Naive thymus-derived CD8-positive, alpha-beta T cell (primary cell): ENCODE measurements at regions of chr1 and their contacts with region 1.

Region 1: GRCh38 chr1:231040019-231040799 is at the start of gene FAM89A:
- DNase-seq: peak; percentile 48 to 84 (median 74)
- ATAC-seq: peak; percentile 71 to 72
- H3K4me3 Mint-ChIP-seq: peak within 1 kb of the TSS; percentile 75 to 89 (median 85)
- H3K27ac Mint-ChIP-seq: peak within 1 kb of the TSS; percentile 27 to 82 (median 73)
- H3K4me1 Mint-ChIP-seq: peaks cover 19 to 36% (median 33%) of the 10 kb centered on the region in 4 donors
- H3K27me3 Mint-ChIP-seq: peaks cover 0 to 2% (median 0%) of the 10 kb centered on the region in 5 donors
- polyA plus RNA-seq, gene FAM89A: 7.4 to 11.1 (median 9.5) TPM

Region 2: DNA sequence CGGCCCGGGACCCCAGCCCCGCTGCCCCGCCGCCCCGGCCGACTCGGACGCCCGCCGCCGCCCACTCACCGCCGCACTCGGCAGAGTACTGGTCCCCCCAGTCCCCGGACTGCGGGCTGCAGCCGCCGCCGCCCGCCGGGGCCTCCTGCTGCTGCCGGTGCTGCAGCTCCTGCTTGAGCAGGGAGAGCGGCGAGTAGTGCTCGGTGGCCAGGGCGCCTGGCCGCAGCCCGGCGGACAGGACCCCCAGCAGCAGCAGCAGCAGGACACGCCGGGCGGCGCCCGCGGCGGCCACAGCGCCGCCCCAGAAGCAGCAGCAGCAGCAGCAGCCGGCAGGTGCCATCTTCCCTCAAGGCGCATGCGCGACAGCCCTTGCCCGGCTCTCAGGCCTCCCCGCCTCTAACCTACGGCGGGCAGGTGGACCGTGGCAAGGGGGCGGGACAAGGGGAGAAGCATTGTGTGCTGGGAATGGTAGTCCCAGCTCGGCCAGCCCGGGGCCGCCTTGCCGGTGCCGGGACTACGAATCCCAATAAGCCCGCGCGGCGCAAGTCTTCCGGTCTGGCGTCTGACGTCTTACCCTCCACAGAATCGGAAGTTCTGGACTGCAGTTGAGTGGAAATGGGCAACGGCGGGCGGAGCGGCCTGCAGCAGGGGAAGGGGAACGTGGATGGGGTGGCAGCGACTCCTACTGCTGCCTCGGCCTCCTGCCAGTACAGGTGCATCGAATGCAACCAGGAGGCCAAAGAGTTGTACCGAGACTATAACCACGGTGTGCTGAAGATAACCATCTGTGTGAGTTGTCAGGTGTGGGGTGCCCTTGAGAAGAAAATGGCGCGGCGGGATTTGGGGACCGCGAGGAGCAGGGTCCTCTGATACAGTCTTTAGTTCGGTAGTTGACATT is 61.5 kb before region 1 on chr1 and contains the starts of genes ARV1 and TTC13:
- POLR2A ChIA-PET with region 1: interaction called, 25 read pairs
- DNase-seq: peak; percentile 88 to 98 (median 94)
- ATAC-seq: peak; percentile 90 to 93
- H3K4me3 Mint-ChIP-seq: peak within 1 kb of the TSS in 9 of 10 donors; percentile 94 to 100 (median 98)
- H3K27ac Mint-ChIP-seq: peak within 1 kb of the TSS; percentile 66 to 99 (median 98)
- H3K4me1 Mint-ChIP-seq: peaks cover 33 to 40% (median 36%) of the 10 kb centered on the region in 4 donors
- H3K27me3 Mint-ChIP-seq: no peaks in the 10 kb centered on the region
- polyA plus RNA-seq, gene ARV1: 30.1 to 35.2 (median 30.9) TPM
- polyA plus RNA-seq, gene TTC13: 6.9 to 10.4 (median 8.0) TPM